ENCODE measurements at regions of chr5 and their contacts with region 1.

Region 1: GRCh38 chr5:157858527-157859226 is at the start of gene CLINT1:
- H3K4me3 Mint-ChIP-seq: peak within 1 kb of the TSS; percentile 98
- H3K27ac Mint-ChIP-seq: peak within 1 kb of the TSS; percentile 98
- H3K4me1 Mint-ChIP-seq: peaks cover 26% of the 10 kb centered on the region
- H3K27me3 Mint-ChIP-seq: no peaks in the 10 kb centered on the region

Region 2: GRCh38 chr5:157816682-157817386 is 41.8 kb before region 1 on chr5:
- intact Hi-C with region 1: loop called (anchors 5 kb)
- H3K4me3 Mint-ChIP-seq: no peak overlapping the region
- H3K27ac Mint-ChIP-seq: no peak overlapping the region
- H3K4me1 Mint-ChIP-seq: peaks cover 5% of the 10 kb centered on the region
- H3K27me3 Mint-ChIP-seq: no peaks in the 10 kb centered on the region

Region 3: DNA sequence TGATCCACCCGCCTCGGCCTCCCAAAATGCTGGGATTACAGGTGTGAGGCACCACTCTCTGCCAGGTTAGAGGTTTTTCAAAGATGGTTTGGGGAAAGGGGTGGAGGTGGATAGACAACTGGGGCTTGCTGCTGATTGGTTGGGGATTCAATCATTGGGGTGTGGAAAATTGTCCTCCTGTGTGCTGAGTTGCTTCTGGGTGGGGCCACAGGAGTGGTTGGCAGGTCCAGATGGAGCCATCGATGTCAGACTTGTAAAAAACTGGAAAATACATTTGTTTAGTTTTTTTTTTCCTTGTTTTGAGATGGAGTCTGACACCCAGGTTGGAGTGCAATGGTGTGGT is 62.1 kb after region 1 on chr5:
- intact Hi-C with region 1: loop called (anchors 2 kb)
- H3K4me3 Mint-ChIP-seq: no peak overlapping the region
- H3K27ac Mint-ChIP-seq: no peak overlapping the region
- H3K4me1 Mint-ChIP-seq: peaks cover 34% of the 10 kb centered on the region
- H3K27me3 Mint-ChIP-seq: no peaks in the 10 kb centered on the region

Region 4: GRCh38 chr5:157948738-157949410 is 90.2 kb after region 1 on chr5:
- intact Hi-C with region 1: loop called (anchors 2 kb)
- H3K4me3 Mint-ChIP-seq: no peak overlapping the region
- H3K27ac Mint-ChIP-seq: no peak overlapping the region
- H3K4me1 Mint-ChIP-seq: peaks cover 7% of the 10 kb centered on the region
- H3K27me3 Mint-ChIP-seq: peaks cover 2% of the 10 kb centered on the region